ENCODE measurements at regions of chr6 and their contacts with region 1.

Region 1: DNA sequence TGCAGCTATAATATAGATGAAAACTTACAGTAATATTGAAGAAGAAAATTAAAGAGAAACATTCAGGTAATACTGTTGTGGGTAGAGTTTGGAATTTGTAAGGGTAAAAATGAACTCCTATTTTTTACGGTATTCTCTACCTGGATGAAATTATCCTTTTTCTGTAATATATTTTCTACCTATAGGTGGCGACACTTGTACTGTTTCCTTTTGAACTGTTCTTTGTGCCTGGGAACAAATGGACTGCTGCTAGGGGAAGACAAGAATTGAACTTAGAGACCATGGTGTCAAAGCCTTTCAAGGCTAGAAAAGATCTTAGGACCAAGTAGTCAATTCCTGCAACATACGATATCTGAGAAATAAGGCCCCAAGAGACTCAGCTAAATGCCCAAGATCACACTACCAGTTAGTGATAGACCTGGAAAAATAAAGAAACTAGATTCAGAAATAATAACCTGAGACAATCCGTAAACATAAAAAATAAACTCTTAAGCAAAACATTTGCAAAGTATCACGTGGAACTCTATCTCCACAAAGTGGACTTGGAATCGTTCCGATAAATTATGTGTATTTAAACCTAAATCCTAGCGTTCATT is 383.8 kb downstream of the TFAP2A start:
- DNase-seq: no peak
- ATAC-seq: no peak

Region 2: GRCh38 chr6:10411971-10412745 is 381.1 kb after region 1 on chr6:
- intact Hi-C with region 1: loop called (anchors 10 kb)
- DNase-seq: no peak
- ATAC-seq: peak; percentile 57

Region 3: GRCh38 chr6:10595731-10596664 is 565.0 kb after region 1 on chr6:
- intact Hi-C with region 1: loop called (anchors 5 kb)
- DNase-seq: no peak
- ATAC-seq: no peak